Right ventricle myocardium inferior (tissue), 1 donor: ENCODE measurements at regions of chr12 and their contacts with region 1.

Region 1: GRCh38 chr12:117874842-117875434 is 93.9 kb downstream of the KSR2 start:
- DNase-seq: peak; percentile 71
- ATAC-seq: peak; percentile 79

Region 2: GRCh38 chr12:117518594-117519270 is 356.2 kb before region 1 on chr12:
- intact Hi-C with region 1: no loop called
- DNase-seq: peak; percentile 85
- ATAC-seq: peak; percentile 83

Region 3: DNA sequence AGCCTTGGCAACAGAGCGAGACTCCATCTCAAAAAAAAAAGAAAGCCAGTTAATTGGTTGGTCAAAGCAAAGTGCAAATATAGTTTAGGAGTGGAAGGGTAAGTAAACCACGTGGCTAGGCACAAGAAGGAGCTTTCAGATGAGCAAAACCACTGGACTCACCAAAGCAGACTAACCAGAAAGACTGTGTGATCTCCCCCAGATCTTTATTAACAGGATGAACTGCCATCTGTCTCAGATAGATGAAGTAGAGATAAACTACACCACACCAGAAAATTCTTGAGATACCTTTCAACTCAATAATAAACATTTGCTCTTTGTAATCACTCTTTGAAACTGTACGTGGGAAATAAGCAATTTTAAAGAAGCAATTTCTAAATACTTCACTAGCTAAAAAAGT is 87.3 kb before region 1 on chr12:
- intact Hi-C with region 1: no loop called
- DNase-seq: no peak
- ATAC-seq: no peak

Region 4: DNA sequence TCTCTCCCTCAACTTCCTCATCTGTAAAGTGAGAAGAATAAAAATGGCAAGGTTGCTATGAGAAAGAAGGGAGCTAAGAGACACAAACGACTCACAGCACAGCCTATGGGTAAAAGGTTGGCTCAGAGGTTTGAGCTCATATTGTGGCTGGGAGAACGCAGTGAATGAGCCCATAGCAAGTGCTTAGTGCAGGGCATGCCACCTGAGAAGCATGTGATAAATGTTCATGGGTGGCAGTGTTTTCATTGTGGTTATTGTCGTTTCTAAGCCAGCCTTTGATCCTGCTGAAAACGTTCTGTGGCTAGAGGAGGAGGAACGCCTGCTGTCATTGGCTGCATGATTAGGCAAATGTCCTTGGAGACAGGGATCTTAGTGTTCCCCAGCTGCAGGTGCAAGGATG is 56.5 kb before region 1 on chr12:
- intact Hi-C with region 1: no loop called
- DNase-seq: no peak
- ATAC-seq: no peak

Region 5: GRCh38 chr12:118034429-118035215 is 159.7 kb after region 1 on chr12:
- intact Hi-C with region 1: loop called (anchors 5 kb)
- DNase-seq: no peak
- ATAC-seq: peak; percentile 68

Region 6: GRCh38 chr12:118103604-118104382 is 228.9 kb after region 1 on chr12 and contains the start of gene VSIG10:
- intact Hi-C with region 1: loop called (anchors 10 kb)
- DNase-seq: peak; percentile 84
- ATAC-seq: peak; percentile 98
- total RNA-seq, gene VSIG10: 12.4 TPM